ENCODE measurements at regions of chr2 and their contacts with region 1.

Region 1: GRCh38 chr2:10302479-10303180 is at the start of gene HPCAL1:
- DNase-seq: peak; percentile 96
- ATAC-seq: peak; percentile 89
- H3K4me3 ChIP-seq: peak within 1 kb of the TSS; percentile 68 to 93 (median 91)
- H3K27ac ChIP-seq: peak within 1 kb of the TSS; percentile 88
- H3K4me1 ChIP-seq: peaks cover 64% of the 10 kb centered on the region
- H3K27me3 ChIP-seq: no peaks in the 10 kb centered on the region; a peak in 1 of 5 replicates
- CTCF ChIP-seq: peak; percentile 78
- EP300 ChIP-seq: peak; percentile 18 to 66; a peak in 2 of 4 replicates
- POLR2A ChIP-seq: peak; percentile 59 to 83; a peak in 3 of 4 replicates
- RAD21 ChIP-seq: peak; percentile 80
- total RNA-seq, gene HPCAL1: 23.3 and 29.9 TPM in 2 replicates

Region 2: GRCh38 chr2:10188216-10188615 is 114.4 kb before region 1 on chr2:
- CTCF ChIA-PET with region 1: interaction called, 10 read pairs
- POLR2A ChIA-PET with region 1: no interaction called
- in situ Hi-C with region 1: no loop called
- intact Hi-C with region 1: no loop called
- DNase-seq: peak; percentile 78
- ATAC-seq: peak; percentile 89
- H3K4me3 ChIP-seq: no peak overlapping the region
- H3K27ac ChIP-seq: no peak overlapping the region
- H3K4me1 ChIP-seq: no peaks in the 10 kb centered on the region
- H3K27me3 ChIP-seq: no peaks in the 10 kb centered on the region
- CTCF ChIP-seq: peak; percentile 64
- EP300 ChIP-seq: no peak
- POLR2A ChIP-seq: no peak
- RAD21 ChIP-seq: peak; percentile 83

Region 3: GRCh38 chr2:10278029-10278762 is 24.4 kb before region 1 on chr2:
- CTCF ChIA-PET with region 1: no interaction called
- POLR2A ChIA-PET with region 1: interaction called, 105 read pairs
- in situ Hi-C with region 1: no loop called
- intact Hi-C with region 1: no loop called
- DNase-seq: peak; percentile 87
- ATAC-seq: peak; percentile 69
- H3K4me3 ChIP-seq: peak overlapping the region; percentile 27 to 78 (median 52)
- H3K27ac ChIP-seq: peak overlapping the region; percentile 69
- H3K4me1 ChIP-seq: peaks cover 47% of the 10 kb centered on the region
- H3K27me3 ChIP-seq: peaks cover 3 to 18% of the 10 kb centered on the region in 2 experiments; a peak in 4 of 5 replicates
- CTCF ChIP-seq: peak; percentile 4
- EP300 ChIP-seq: peak in 1 of 2 experiments; percentile 52; a peak in 2 of 4 replicates
- POLR2A ChIP-seq: peak in 1 of 2 experiments; percentile 43; a peak in 1 of 4 replicates
- RAD21 ChIP-seq: no peak

Region 4: GRCh38 chr2:10329880-10330699 is 27.5 kb after region 1 on chr2:
- CTCF ChIA-PET with region 1: no interaction called
- POLR2A ChIA-PET with region 1: interaction called, 47 read pairs
- in situ Hi-C with region 1: no loop called
- intact Hi-C with region 1: no loop called
- DNase-seq: peak; percentile 78
- ATAC-seq: peak; percentile 65
- H3K4me3 ChIP-seq: peak overlapping the region; percentile 47 to 67 (median 54)
- H3K27ac ChIP-seq: peak overlapping the region; percentile 60
- H3K4me1 ChIP-seq: peaks cover 84% of the 10 kb centered on the region
- H3K27me3 ChIP-seq: no peaks in the 10 kb centered on the region; a peak in 1 of 5 replicates
- CTCF ChIP-seq: no peak
- EP300 ChIP-seq: peak; percentile 10 to 57; a peak in 1 of 4 replicates
- POLR2A ChIP-seq: peak in 1 of 2 experiments; percentile 35; a peak in 1 of 4 replicates
- RAD21 ChIP-seq: no peak

Region 5: GRCh38 chr2:10408649-10409579 is 106.3 kb after region 1 on chr2:
- CTCF ChIA-PET with region 1: interaction called, 11 read pairs
- POLR2A ChIA-PET with region 1: interaction called, 32 read pairs
- in situ Hi-C with region 1: no loop called
- intact Hi-C with region 1: loop called (anchors 1 kb)
- DNase-seq: peak; percentile 87
- ATAC-seq: peak; percentile 89
- H3K4me3 ChIP-seq: peak overlapping the region in 1 of 3 experiments; percentile 27; a peak in 1 of 6 replicates
- H3K27ac ChIP-seq: peak overlapping the region; percentile 56
- H3K4me1 ChIP-seq: peaks cover 28% of the 10 kb centered on the region
- H3K27me3 ChIP-seq: no peaks in the 10 kb centered on the region
- CTCF ChIP-seq: peak; percentile 100
- EP300 ChIP-seq: no peak; a peak in 1 of 4 replicates
- POLR2A ChIP-seq: no peak
- RAD21 ChIP-seq: peak; percentile 100